Left cardiac atrium (tissue), 4 donors: ENCODE measurements at regions of chr2 and their contacts with region 1.

Region 1: GRCh38 chr2:191030521-191031154 is 16.7 kb upstream of the STAT1 start:
- DNase-seq: no peak
- ATAC-seq: peak; percentile 66 to 68

Region 2: GRCh38 chr2:190781604-190782198 is 248.9 kb before region 1 on chr2:
- intact Hi-C with region 1: loop called in 1 of 2 experiments (anchors 2 kb)
- DNase-seq: peak; percentile 34
- ATAC-seq: peak; percentile 59 to 70